ENCODE measurements at regions of chr17 and their contacts with region 1.

Region 1: DNA sequence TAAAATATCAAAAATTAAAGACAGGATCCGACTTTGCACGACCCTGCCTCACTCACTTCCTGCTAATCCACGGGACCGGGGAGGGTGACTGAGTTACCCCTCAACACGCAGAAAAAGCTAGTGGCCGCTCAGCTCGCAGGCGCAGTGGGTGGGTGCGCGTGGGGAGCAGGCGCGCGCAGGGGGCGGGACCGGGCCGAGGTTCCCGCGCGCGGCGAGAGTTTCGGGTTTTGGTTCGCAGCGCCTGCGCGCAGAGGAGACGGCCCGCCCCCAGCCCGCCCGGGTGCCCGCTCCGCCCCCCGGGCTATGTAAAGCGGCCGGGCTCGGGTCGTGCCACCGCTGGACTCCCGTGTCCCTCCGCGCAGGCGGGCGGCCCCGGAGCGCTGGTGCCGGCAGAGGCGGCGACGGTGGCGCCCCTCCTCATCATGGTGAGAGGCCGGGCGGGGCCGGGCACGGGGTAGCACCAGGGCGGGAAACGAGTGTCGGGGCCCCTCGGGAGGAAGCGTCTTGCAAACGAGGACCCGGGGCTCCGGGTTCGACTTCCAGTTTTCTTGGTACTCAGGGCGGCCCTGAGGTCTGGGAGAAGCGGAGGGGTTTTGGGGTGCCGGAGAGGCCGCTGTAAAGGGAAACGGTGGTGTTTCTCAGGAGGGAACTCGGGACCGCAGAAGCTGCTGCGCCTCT is at the start of gene CNP:
- DNase-seq: peak; percentile 55
- H3K4me3 ChIP-seq: peak within 1 kb of the TSS; percentile 92
- CTCF ChIP-seq: no peak

Region 2: GRCh38 chr17:41738077-41738735 is 228.4 kb before region 1 on chr17:
- in situ Hi-C with region 1: loop called (anchors 25 kb)
- DNase-seq: peak; percentile 54
- H3K4me3 ChIP-seq: no peak overlapping the region
- CTCF ChIP-seq: peak; percentile 96

Region 3: DNA sequence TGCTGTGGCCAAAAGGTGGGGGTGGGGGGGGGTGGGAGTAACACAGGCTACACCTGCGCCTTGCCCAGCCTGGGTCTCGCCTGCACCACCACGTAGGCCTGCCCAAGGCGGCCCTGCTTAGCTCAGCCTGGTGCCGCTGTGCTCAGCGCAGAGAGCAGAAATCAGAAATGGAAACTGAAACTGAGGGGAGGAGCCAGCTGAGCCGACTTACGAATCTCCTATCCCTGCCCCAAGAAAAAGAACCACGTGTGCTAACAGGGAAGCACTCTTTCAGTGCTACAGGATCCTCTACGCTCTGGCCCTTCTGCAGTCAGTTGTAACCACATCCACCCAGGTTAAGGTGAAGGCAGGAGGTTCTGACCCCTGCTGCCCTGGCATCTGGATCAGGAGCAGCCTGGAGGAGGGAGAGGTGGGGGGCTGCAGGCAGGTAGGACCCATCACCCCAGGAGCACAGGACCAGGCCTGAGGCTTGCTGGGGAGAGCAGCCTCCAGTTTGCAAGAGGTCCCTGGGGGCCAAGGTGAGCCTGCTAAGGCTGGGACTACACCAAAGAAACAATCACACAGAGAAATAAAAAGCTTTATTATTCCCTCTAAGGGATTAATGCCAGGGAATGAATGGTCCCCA is 146.1 kb after region 1 on chr17 and contains the start of gene DHX58:
- in situ Hi-C with region 1: loop called (anchors 5 kb)
- DNase-seq: peak; percentile 22
- H3K4me3 ChIP-seq: no peak within 1 kb of the TSS
- CTCF ChIP-seq: no peak

Measured in astrocyte of the cerebellum (primary cell).